Activated CD4-positive, alpha-beta memory T cell treated with anti-CD3 and anti-CD28 coated beads for 36 hours (primary cell): ENCODE measurements at regions of chr7 and their contacts with region 1.

Region 1: GRCh38 chr7:85554236-85555178 is 367.7 kb upstream of the SEMA3D start:
- DNase-seq: no peak
- H3K4me3 Mint-ChIP-seq: no peak overlapping the region
- H3K27ac Mint-ChIP-seq: no peak overlapping the region
- H3K4me1 Mint-ChIP-seq: no peaks in the 10 kb centered on the region
- H3K27me3 Mint-ChIP-seq: no peaks in the 10 kb centered on the region

Region 2: DNA sequence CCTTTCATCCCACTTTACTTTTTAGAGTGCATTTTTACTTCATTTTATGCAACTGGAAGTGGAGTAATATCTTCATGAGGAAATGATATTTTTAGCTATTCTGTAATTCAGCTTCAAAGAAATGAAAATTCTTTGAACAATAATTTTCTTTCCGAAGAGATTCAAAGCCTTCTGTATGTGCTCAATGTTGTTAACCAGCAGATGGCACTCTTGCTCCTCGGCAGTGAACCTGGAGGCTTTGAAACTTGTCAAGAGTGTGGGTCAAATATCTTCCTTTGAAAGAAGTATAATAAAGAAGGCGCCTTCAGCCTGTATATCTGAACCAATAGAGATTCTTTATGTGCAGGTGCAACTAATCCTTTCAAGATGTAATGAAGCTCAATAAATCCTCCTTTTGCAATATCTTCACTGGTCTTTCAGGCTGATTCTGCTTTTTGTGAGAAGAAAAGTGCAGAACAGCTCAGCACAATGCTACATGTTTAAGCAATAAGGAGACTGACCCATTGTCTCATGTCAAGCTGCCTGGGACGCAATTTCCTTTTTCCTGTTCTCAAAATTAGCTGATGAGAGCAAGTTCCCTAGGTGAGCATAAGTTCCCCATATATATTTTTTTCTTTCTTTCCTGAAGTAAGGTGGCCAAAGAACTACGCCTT is 1618.3 kb before region 1 on chr7:
- CTCF ChIA-PET with region 1: no interaction called
- POLR2A ChIA-PET with region 1: no interaction called
- intact Hi-C with region 1: loop called (anchors 10 kb)
- DNase-seq: peak; percentile 55
- H3K4me3 Mint-ChIP-seq: no peak overlapping the region
- H3K27ac Mint-ChIP-seq: no peak overlapping the region
- H3K4me1 Mint-ChIP-seq: no peaks in the 10 kb centered on the region
- H3K27me3 Mint-ChIP-seq: no peaks in the 10 kb centered on the region

Region 3: GRCh38 chr7:85041605-85042216 is 512.8 kb before region 1 on chr7:
- CTCF ChIA-PET with region 1: interaction called, 12 read pairs
- POLR2A ChIA-PET with region 1: no interaction called
- intact Hi-C with region 1: loop called (anchors 2 kb)
- DNase-seq: peak; percentile 40
- H3K4me3 Mint-ChIP-seq: no peak overlapping the region
- H3K27ac Mint-ChIP-seq: no peak overlapping the region
- H3K4me1 Mint-ChIP-seq: no peaks in the 10 kb centered on the region
- H3K27me3 Mint-ChIP-seq: no peaks in the 10 kb centered on the region

Region 4: GRCh38 chr7:85186521-85187241 is 367.8 kb before region 1 on chr7 and contains the start of gene SEMA3D:
- CTCF ChIA-PET with region 1: no interaction called
- POLR2A ChIA-PET with region 1: no interaction called
- intact Hi-C with region 1: loop called (anchors 1 kb)
- DNase-seq: peak; percentile 39
- H3K4me3 Mint-ChIP-seq: no peak within 1 kb of the TSS
- H3K27ac Mint-ChIP-seq: no peak within 1 kb of the TSS
- H3K4me1 Mint-ChIP-seq: peaks cover 5% of the 10 kb centered on the region
- H3K27me3 Mint-ChIP-seq: peaks cover 27% of the 10 kb centered on the region
- total RNA-seq, gene SEMA3D: not detected

Region 5: DNA sequence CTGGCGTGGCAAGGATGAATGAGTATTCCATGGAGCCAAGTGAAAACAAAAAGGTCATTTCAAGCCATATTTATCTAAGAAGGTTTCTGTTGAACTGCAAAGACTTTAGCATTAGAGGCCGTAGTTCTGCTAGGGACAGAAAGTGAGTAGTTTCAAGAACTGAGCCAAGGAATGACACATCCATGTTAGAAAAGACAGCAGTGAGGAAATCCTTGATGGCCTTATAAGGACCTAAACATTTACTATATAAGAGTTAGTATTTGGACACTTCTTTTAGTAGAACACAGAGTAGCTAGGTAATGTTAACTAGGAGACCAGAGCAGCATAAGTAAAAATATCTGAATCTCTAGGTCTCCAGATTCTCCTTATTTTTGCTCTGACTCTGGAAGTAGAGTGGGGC is 37.8 kb before region 1 on chr7:
- CTCF ChIA-PET with region 1: no interaction called
- POLR2A ChIA-PET with region 1: no interaction called
- intact Hi-C with region 1: no loop called
- DNase-seq: no peak
- H3K4me3 Mint-ChIP-seq: no peak overlapping the region
- H3K27ac Mint-ChIP-seq: no peak overlapping the region
- H3K4me1 Mint-ChIP-seq: no peaks in the 10 kb centered on the region
- H3K27me3 Mint-ChIP-seq: no peaks in the 10 kb centered on the region